ENCODE measurements at regions of chr9 and their contacts with region 1.

Region 1: DNA sequence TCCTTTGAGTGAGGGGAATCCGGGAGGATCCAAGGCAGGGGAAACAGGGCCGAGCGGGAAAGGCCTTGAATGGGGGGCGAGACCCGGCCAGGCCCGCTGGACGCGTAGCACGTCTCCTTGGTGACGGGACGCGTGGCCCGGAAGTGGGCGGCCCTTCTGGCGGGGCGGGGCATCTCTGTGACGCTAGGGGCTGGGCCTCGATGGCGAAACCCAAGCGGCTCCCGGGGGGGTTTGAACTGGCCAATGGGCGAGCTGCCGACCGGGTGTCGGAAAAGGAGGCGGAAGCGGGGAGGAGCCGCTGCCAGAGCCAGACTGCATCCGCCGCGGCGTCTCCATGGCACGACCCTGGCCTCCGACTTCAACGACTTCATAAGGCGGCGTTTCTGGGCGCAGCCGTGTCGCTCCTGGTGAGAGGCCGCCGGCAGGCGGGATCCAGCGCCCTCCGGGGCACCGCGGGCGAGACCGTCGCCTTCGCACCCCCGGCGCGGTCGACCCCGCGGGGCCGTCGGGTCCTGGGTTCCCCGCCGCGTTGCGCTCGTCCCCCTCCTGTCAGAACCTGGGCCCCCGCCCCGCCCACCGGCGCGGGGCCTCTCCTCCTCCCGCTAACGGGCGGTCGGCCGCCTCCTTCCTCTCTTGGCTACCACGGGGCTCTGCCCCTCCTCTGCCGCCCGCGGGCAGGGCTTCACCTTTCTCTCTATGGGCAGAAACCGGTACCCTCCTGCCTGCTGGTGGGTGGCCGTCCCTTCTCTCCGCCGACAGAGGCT is at the start of gene ODF2:
- DNase-seq: peak; percentile 96 to 99 (median 98)
- ATAC-seq: peak; percentile 94
- H3K4me3 ChIP-seq: peak within 1 kb of the TSS; percentile 87
- H3K4me3 Mint-ChIP-seq: peak within 1 kb of the TSS; percentile 85 to 94 (median 90)
- H3K27ac ChIP-seq: peak within 1 kb of the TSS; percentile 88
- H3K27ac Mint-ChIP-seq: peak within 1 kb of the TSS; percentile 76 to 94 (median 90)
- H3K4me1 ChIP-seq: peaks cover 7 to 9% of the 10 kb centered on the region in 2 donors
- H3K4me1 Mint-ChIP-seq: peaks cover 15 to 27% (median 20%) of the 10 kb centered on the region in 7 donors
- H3K27me3 ChIP-seq: no peaks in the 10 kb centered on the region
- H3K27me3 Mint-ChIP-seq: no peaks in the 10 kb centered on the region
- total RNA-seq, gene ODF2: 25.0 to 52.8 (median 30.2) TPM

Region 2: DNA sequence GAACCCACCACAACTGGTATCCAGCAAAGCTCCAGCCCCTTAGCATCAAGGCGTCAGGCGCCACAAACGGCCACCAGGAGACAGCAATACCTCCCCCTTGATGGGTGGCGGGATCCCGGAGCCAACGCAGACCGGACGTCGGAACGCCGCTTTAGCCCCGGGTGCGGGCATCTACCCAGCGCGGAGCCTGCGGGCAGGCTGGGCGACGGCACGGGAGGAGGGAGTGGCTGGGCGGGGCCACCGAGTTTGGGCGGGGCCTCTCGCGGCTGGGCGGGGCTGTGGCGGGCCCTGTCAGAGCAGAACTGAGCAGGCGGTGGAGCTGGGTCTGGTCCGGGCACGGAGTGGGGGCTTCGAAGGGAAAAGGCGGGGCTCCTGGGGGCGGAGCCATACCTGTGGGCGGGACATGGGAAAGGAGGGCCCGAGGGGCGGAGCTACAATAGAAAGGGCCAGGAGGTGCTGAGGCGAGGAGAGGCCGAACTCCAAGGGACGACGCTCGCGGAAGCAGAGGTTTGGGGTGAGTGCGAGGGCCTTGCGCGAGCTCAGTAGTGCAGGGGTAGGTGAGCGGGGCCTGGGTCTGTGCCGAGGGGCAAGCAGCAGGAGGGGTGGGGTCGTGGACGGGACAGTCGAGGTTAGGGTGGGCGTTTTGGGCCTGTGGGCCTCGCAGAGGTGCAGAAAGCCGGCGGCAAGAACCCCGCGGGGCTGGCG is 1231.7 kb before region 1 on chr9:
- CTCF ChIA-PET with region 1: no interaction called
- POLR2A ChIA-PET with region 1: no interaction called
- intact Hi-C with region 1: loop called in 1 of 2 experiments (anchors 10 kb)
- DNase-seq: peak; percentile 81 to 90 (median 85)
- ATAC-seq: peak; percentile 82
- H3K4me3 ChIP-seq: peak overlapping the region; percentile 51
- H3K4me3 Mint-ChIP-seq: peak overlapping the region; percentile 74 to 93 (median 85)
- H3K27ac ChIP-seq: no peak overlapping the region
- H3K27ac Mint-ChIP-seq: peak overlapping the region; percentile 8 to 94 (median 82)
- H3K4me1 ChIP-seq: peaks cover 10 to 31% of the 10 kb centered on the region in 2 donors
- H3K4me1 Mint-ChIP-seq: peaks cover 24 to 49% (median 41%) of the 10 kb centered on the region in 7 donors
- H3K27me3 ChIP-seq: no peaks in the 10 kb centered on the region
- H3K27me3 Mint-ChIP-seq: peaks cover 0 to 58% (median 12%) of the 10 kb centered on the region in 5 donors

Region 3: DNA sequence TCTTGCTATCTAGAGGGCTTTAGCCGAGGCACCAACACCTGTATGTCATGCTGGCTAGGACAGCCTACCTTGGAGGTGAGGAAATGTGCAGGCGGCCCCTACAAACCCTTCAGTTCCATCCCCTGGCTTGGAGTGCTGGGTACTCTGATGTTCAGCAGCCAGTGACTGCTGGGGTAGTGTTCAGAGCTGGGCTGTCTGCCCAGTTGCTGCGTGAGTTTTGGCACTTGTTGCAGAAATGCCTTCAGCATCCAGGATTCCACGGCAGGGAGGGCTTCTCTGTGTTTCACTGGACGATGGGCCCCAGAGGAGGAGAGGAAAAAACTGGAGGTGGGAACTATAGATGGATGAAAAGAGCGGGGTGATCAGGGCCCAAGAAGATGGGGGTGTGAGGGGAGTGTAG is 169.6 kb before region 1 on chr9:
- CTCF ChIA-PET with region 1: no interaction called
- POLR2A ChIA-PET with region 1: no interaction called
- intact Hi-C with region 1: no loop called
- DNase-seq: no peak
- ATAC-seq: no peak
- H3K4me3 ChIP-seq: no peak overlapping the region
- H3K4me3 Mint-ChIP-seq: no peak overlapping the region
- H3K27ac ChIP-seq: no peak overlapping the region
- H3K27ac Mint-ChIP-seq: no peak overlapping the region
- H3K4me1 ChIP-seq: no peaks in the 10 kb centered on the region
- H3K4me1 Mint-ChIP-seq: no peaks in the 10 kb centered on the region
- H3K27me3 ChIP-seq: no peaks in the 10 kb centered on the region
- H3K27me3 Mint-ChIP-seq: no peaks in the 10 kb centered on the region

Region 4: GRCh38 chr9:128322404-128323211 is 133.4 kb before region 1 on chr9 and contains the starts of genes COQ4 and TRUB2:
- CTCF ChIA-PET with region 1: no interaction called
- POLR2A ChIA-PET with region 1: no interaction called
- intact Hi-C with region 1: loop called (anchors 1 kb)
- DNase-seq: peak; percentile 80 to 95 (median 94)
- ATAC-seq: peak; percentile 95
- H3K4me3 ChIP-seq: peak within 1 kb of the TSS; percentile 98
- H3K4me3 Mint-ChIP-seq: peak within 1 kb of the TSS; percentile 82 to 99 (median 96)
- H3K27ac ChIP-seq: peak within 1 kb of the TSS; percentile 85
- H3K27ac Mint-ChIP-seq: peak within 1 kb of the TSS; percentile 95 to 99 (median 98)
- H3K4me1 ChIP-seq: peaks cover 10 to 13% of the 10 kb centered on the region in 2 donors
- H3K4me1 Mint-ChIP-seq: peaks cover 4 to 45% (median 29%) of the 10 kb centered on the region in 7 donors
- H3K27me3 ChIP-seq: no peaks in the 10 kb centered on the region
- H3K27me3 Mint-ChIP-seq: peaks cover 0 to 2% (median 0%) of the 10 kb centered on the region in 5 donors
- total RNA-seq, gene COQ4: 32.9 to 47.2 (median 42.4) TPM
- total RNA-seq, gene TRUB2: 11.5 to 27.2 (median 21.6) TPM

Region 5: GRCh38 chr9:128420060-128420650 is 35.9 kb before region 1 on chr9:
- CTCF ChIA-PET with region 1: interaction called, 4 read pairs
- POLR2A ChIA-PET with region 1: interaction called, 3 read pairs
- intact Hi-C with region 1: loop called in 1 of 2 experiments (anchors 1 kb)
- DNase-seq: peak in 8 of 9 donors; percentile 33 to 85 (median 44)
- ATAC-seq: peak; percentile 92
- H3K4me3 ChIP-seq: peak overlapping the region; percentile 58
- H3K4me3 Mint-ChIP-seq: peak overlapping the region; percentile 70 to 88 (median 81)
- H3K27ac ChIP-seq: no peak overlapping the region
- H3K27ac Mint-ChIP-seq: no peak overlapping the region
- H3K4me1 ChIP-seq: peaks cover 8 to 9% of the 10 kb centered on the region in 2 donors
- H3K4me1 Mint-ChIP-seq: peaks cover 5 to 13% (median 11%) of the 10 kb centered on the region in 7 donors
- H3K27me3 ChIP-seq: peaks cover 5 to 7% of the 10 kb centered on the region in 2 donors
- H3K27me3 Mint-ChIP-seq: peaks cover 16 to 55% (median 25%) of the 10 kb centered on the region in 5 donors

Region 6: DNA sequence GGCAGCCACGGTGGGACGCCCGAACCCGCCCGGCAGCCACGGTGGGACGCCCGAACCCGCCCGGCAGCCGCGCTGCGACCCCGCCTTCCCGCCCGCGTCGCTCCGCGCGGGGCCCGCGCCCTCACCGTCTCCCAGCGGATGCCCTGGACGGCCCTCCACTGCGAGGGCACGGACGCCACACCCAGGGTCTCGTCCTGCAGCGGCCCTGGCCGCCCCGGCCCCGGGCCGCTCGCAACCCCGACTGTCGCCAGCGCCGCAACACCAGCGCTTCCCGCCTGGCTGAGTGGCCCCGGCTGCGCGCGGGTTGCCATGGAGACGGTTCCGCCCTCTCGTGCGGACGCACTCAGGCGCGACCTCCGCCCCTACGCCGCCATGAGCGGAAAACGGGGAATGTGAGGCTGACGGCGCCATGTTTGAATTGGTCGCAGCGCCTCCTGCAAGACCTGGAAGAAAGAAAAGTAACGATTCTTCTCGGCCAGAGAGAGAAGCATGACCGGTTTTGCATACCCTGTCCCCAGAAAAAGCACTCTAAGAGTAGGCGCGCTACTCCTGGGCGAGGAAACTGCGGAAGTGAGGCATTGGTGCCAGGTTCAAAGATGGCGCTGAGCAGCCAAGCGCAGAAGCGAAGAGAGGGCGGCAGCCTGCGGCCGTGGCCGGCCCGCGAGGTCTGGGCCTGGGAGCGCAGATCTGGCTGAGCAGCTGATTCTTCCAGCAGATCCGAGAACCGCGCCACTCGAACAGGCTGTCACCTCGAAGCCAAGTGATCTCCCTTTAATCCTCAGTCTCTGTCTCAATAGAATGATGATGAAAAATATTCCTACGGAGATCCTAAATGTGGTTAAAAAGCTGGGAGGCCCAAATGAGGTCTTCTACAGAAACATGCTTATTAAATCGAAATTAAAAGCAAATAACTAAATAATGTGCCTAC is 200.6 kb after region 1 on chr9 and contains the start of gene DYNC2I2:
- CTCF ChIA-PET with region 1: no interaction called
- POLR2A ChIA-PET with region 1: interaction called, 5 read pairs
- intact Hi-C with region 1: loop called in 1 of 2 experiments (anchors 1 kb)
- DNase-seq: peak; percentile 91 to 96 (median 96)
- ATAC-seq: peak; percentile 98
- H3K4me3 ChIP-seq: peak within 1 kb of the TSS; percentile 96
- H3K4me3 Mint-ChIP-seq: peak within 1 kb of the TSS; percentile 88 to 98 (median 94)
- H3K27ac ChIP-seq: peak within 1 kb of the TSS; percentile 99
- H3K27ac Mint-ChIP-seq: peak within 1 kb of the TSS; percentile 95 to 100 (median 99)
- H3K4me1 ChIP-seq: peaks cover 3 to 9% of the 10 kb centered on the region in 2 donors
- H3K4me1 Mint-ChIP-seq: peaks cover 0 to 14% (median 7%) of the 10 kb centered on the region in 7 donors
- H3K27me3 ChIP-seq: no peaks in the 10 kb centered on the region
- H3K27me3 Mint-ChIP-seq: no peaks in the 10 kb centered on the region
- total RNA-seq, gene DYNC2I2: 2.5 to 41.7 (median 3.8) TPM

Region 7: GRCh38 chr9:128786681-128787601 is 330.9 kb after region 1 on chr9 and contains the start of gene TBC1D13:
- CTCF ChIA-PET with region 1: no interaction called
- POLR2A ChIA-PET with region 1: no interaction called
- intact Hi-C with region 1: loop called in 1 of 2 experiments (anchors 1 kb)
- DNase-seq: peak; percentile 88 to 93 (median 92)
- ATAC-seq: peak; percentile 99
- H3K4me3 ChIP-seq: peak within 1 kb of the TSS; percentile 90
- H3K4me3 Mint-ChIP-seq: peak within 1 kb of the TSS; percentile 80 to 98 (median 92)
- H3K27ac ChIP-seq: peak within 1 kb of the TSS; percentile 82
- H3K27ac Mint-ChIP-seq: peak within 1 kb of the TSS; percentile 87 to 98 (median 95)
- H3K4me1 ChIP-seq: peaks cover 13% of the 10 kb centered on the region in 2 donors
- H3K4me1 Mint-ChIP-seq: peaks cover 6 to 29% (median 23%) of the 10 kb centered on the region in 7 donors
- H3K27me3 ChIP-seq: no peaks in the 10 kb centered on the region
- H3K27me3 Mint-ChIP-seq: no peaks in the 10 kb centered on the region
- total RNA-seq, gene TBC1D13: 21.0 to 35.2 (median 24.9) TPM

Region 8: GRCh38 chr9:129036241-129036922 is 580.4 kb after region 1 on chr9 and contains the start of gene MIGA2:
- CTCF ChIA-PET with region 1: no interaction called
- POLR2A ChIA-PET with region 1: no interaction called
- intact Hi-C with region 1: loop called in 1 of 2 experiments (anchors 5 kb)
- DNase-seq: peak; percentile 78 to 93 (median 90)
- ATAC-seq: peak; percentile 99
- H3K4me3 ChIP-seq: peak within 1 kb of the TSS; percentile 87
- H3K4me3 Mint-ChIP-seq: peak within 1 kb of the TSS; percentile 90 to 99 (median 94)
- H3K27ac ChIP-seq: peak within 1 kb of the TSS; percentile 72
- H3K27ac Mint-ChIP-seq: peak within 1 kb of the TSS; percentile 56 to 93 (median 87)
- H3K4me1 ChIP-seq: peaks cover 13 to 17% of the 10 kb centered on the region in 2 donors
- H3K4me1 Mint-ChIP-seq: peaks cover 22 to 41% (median 37%) of the 10 kb centered on the region in 7 donors
- H3K27me3 ChIP-seq: no peaks in the 10 kb centered on the region
- H3K27me3 Mint-ChIP-seq: no peaks in the 10 kb centered on the region
- total RNA-seq, gene MIGA2: 50.0 to 73.4 (median 60.7) TPM